Activated T-helper 1 cell treated with anti-CD3 and anti-CD28 coated beads, Interleukin-12 subunit alpha, Interleukin-12 subunit beta, Interleukin-2, Interleukin-4 antibody, amounts not matched to agents 30 ng/mL and 10 ng/mL and 1 ng/mL, durations not matched to agents 14 hours and 24 hours and 36 hours (primary cell): ENCODE measurements at regions of chr18 and their contacts with region 1.

Region 1: GRCh38 chr18:23930002-23930401 is 84.6 kb upstream of the TTC39C start:
- DNase-seq: no peak
- H3K4me3 Mint-ChIP-seq: no peak overlapping the region
- H3K27ac Mint-ChIP-seq: no peak overlapping the region
- H3K4me1 Mint-ChIP-seq: peaks cover 35% of the 10 kb centered on the region
- H3K27me3 Mint-ChIP-seq: peaks cover 6% of the 10 kb centered on the region

Region 2: DNA sequence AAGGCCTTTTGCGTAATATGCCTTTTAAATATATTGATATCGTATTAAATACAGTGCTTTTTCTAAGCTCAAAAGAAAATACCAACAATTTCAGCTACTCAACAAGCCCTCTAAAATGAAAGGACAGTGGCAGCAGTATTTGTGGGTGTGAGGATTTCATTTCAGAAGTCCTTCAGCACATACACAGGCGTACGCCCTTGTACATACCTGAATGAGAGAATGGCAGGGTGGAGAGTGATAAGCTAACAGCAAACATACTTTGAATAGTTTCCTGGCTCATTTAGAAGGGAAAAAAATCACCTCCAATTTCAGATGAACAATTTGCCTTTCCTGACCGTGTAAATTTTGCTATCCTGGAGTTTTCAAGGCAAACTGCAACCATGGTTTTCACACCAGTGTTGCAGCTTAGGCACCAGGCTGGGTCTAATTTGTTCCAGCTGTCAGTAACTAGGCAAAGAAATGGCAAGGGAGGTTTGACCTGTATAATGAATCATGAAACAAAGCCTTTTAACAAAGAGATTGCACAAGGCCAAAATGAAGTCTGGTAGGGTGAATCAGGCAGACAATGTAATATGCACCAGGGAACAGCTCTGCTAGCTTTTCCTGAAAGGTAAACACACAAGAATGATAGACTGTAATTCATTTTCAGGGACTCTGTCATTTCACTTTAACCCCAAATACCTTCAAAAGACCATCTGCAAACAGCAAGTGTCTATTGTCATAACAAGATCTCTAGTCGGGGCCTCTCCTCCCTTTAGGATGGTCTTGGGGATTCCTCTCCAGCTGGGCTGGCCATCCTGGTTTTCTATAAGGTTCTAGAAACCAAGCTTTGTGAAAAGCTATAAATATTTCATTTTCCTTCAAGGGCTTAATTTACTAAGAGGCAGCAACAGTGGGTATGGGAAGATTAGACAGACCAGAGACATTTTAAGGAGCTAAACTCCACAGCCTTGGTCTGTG is 278.8 kb before region 1 on chr18:
- intact Hi-C with region 1: no loop called
- DNase-seq: no peak
- H3K4me3 Mint-ChIP-seq: no peak overlapping the region
- H3K27ac Mint-ChIP-seq: no peak overlapping the region
- H3K4me1 Mint-ChIP-seq: no peaks in the 10 kb centered on the region
- H3K27me3 Mint-ChIP-seq: peaks cover 13% of the 10 kb centered on the region

Region 3: DNA sequence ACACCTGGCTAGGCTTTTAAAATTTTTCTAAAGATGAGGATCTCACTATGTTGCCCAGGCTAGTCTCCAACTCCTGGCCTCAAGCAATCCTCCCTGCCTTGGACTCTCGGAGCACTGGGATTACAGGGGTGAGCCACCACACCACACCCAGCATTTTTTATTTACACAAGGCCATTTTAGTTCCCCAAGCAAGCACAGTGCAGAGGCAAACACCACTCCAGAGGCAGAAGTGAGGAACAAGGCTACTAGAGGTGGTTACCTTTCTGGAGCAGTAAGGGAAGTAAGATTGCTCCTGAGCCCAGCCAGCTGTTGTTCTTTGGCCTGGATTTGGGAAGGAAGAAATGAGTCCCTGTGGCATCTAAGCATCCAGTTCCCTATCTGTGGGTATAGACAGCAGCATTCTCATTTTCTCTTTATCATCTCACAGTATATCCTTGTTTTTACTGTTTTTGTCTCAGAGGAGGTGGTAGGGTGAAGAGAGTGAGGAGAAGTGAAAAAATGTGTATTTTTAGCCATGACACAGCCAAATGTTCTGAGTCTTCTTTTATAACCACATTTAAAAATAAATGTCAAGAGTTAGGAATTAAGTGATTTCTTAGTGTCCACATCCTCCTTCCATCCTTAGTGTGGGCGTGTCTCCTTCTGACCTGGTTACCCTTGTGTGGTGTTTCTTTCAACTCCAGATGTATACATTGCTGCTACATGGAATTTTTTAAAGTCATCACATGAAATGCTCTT is 74.1 kb after region 1 on chr18:
- intact Hi-C with region 1: loop called (anchors 2 kb)
- DNase-seq: no peak
- H3K4me3 Mint-ChIP-seq: no peak overlapping the region
- H3K27ac Mint-ChIP-seq: no peak overlapping the region
- H3K4me1 Mint-ChIP-seq: peaks cover 55% of the 10 kb centered on the region
- H3K27me3 Mint-ChIP-seq: no peaks in the 10 kb centered on the region